ENCODE measurements at regions of chr17 and their contacts with region 1.

Region 1: DNA sequence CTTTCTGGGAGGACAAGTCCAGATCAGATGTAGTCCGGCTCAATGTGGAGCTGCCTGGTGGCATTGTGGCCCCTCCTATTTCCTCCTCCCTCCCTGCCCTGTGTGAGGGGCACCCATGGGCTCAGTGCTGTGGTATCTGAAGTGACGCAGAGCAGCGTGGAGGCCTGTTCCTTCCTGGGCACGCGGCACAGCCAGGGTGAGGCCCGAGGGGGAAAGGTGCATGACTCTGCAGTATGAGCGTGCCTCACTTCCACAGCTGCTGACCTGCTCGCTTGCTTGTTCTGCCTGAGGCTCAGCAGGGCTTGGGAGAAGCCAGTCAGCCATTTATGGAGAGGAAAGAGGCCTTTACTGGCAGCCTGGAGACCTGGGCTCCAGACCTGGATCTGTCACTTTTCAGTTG is 11.7 kb downstream of the TMEM238L start:
- DNase-seq: no peak
- ATAC-seq: no peak
- H3K4me3 ChIP-seq: no peak overlapping the region
- H3K4me3 Mint-ChIP-seq: no peak overlapping the region
- H3K27ac ChIP-seq: no peak overlapping the region
- H3K27ac Mint-ChIP-seq: no peak overlapping the region
- H3K4me1 ChIP-seq: peaks cover 6% of the 10 kb centered on the region
- H3K4me1 Mint-ChIP-seq: no peaks in the 10 kb centered on the region
- H3K27me3 ChIP-seq: no peaks in the 10 kb centered on the region
- H3K27me3 Mint-ChIP-seq: no peaks in the 10 kb centered on the region
- CTCF ChIP-seq: no peak

Region 2: GRCh38 chr17:10683853-10684252 is 108.3 kb before region 1 on chr17:
- intact Hi-C with region 1: no loop called
- DNase-seq: peak in 1 of 2 donors; percentile 38
- ATAC-seq: no peak
- H3K4me3 ChIP-seq: no peak overlapping the region
- H3K4me3 Mint-ChIP-seq: no peak overlapping the region
- H3K27ac ChIP-seq: no peak overlapping the region
- H3K27ac Mint-ChIP-seq: no peak overlapping the region
- H3K4me1 ChIP-seq: no peaks in the 10 kb centered on the region
- H3K4me1 Mint-ChIP-seq: peaks cover 0 to 9% of the 10 kb centered on the region in 2 donors
- H3K27me3 ChIP-seq: no peaks in the 10 kb centered on the region
- H3K27me3 Mint-ChIP-seq: no peaks in the 10 kb centered on the region
- CTCF ChIP-seq: peak; percentile 61

Region 3: GRCh38 chr17:10772425-10773380 is 19.4 kb before region 1 on chr17:
- intact Hi-C with region 1: loop called (anchors 2 kb)
- DNase-seq: peak in 1 of 2 donors; percentile 45
- ATAC-seq: no peak
- H3K4me3 ChIP-seq: no peak overlapping the region
- H3K4me3 Mint-ChIP-seq: no peak overlapping the region
- H3K27ac ChIP-seq: no peak overlapping the region
- H3K27ac Mint-ChIP-seq: no peak overlapping the region
- H3K4me1 ChIP-seq: no peaks in the 10 kb centered on the region
- H3K4me1 Mint-ChIP-seq: no peaks in the 10 kb centered on the region
- H3K27me3 ChIP-seq: no peaks in the 10 kb centered on the region
- H3K27me3 Mint-ChIP-seq: peaks cover 0 to 5% of the 10 kb centered on the region in 2 donors
- CTCF ChIP-seq: peak; percentile 75

Region 4: GRCh38 chr17:11082559-11082958 is 290.4 kb after region 1 on chr17:
- intact Hi-C with region 1: no loop called
- DNase-seq: no peak
- ATAC-seq: no peak
- H3K4me3 ChIP-seq: no peak overlapping the region
- H3K4me3 Mint-ChIP-seq: no peak overlapping the region
- H3K27ac ChIP-seq: no peak overlapping the region
- H3K27ac Mint-ChIP-seq: no peak overlapping the region
- H3K4me1 ChIP-seq: no peaks in the 10 kb centered on the region
- H3K4me1 Mint-ChIP-seq: no peaks in the 10 kb centered on the region
- H3K27me3 ChIP-seq: no peaks in the 10 kb centered on the region
- H3K27me3 Mint-ChIP-seq: no peaks in the 10 kb centered on the region
- CTCF ChIP-seq: no peak

Measured in natural killer cell (primary cell).